Heart left ventricle (tissue), 16 donors: ENCODE measurements at regions of chrX and their contacts with region 1.

Region 1: DNA sequence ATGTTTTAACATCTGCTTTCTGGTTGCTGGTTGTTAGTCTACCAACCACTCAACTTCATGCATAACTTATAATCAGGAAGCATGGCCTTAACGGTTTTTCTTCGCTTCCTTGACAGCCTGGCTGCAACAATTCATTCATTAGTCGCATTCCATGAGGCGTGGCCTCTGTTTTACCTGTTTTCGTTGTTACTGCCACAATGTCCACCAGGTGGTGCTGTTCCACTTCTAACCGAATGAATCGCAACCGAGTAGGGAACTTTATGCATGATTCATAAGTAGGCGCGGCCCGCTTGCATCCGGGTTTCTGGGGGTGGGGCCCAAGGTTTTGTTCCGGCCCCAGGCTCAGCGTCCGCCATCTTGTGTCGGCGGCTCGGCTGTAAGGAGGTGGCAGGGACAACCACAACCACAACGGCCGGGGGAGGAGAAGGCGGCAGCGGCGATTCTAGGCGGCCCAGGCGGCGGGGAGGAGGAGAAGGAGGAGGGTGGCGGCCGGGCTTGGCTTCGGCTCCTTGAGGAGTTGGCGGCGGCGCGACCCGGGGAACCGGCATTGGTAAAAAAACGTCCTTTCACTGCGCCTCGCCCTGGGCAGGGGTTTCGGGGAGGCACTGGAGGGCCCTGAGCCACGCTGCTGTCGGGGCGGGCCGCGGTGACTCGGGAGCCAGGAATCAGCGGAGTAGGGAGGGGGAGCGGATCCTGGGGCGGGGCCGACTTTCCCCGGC is at the start of gene UBA1:
- DNase-seq: peak; percentile 90 to 97 (median 93)
- ATAC-seq: peak; percentile 84 to 95 (median 94)
- H3K4me3 ChIP-seq: peak within 1 kb of the TSS; percentile 61 to 99 (median 83)
- H3K27ac ChIP-seq: peak within 1 kb of the TSS; percentile 84 to 98 (median 96)
- H3K4me1 ChIP-seq: peaks cover 0 to 68% (median 36%) of the 10 kb centered on the region in 12 donors
- H3K27me3 ChIP-seq: peaks cover 0 to 18% (median 0%) of the 10 kb centered on the region in 9 donors
- CTCF ChIP-seq: peak; percentile 60 to 93 (median 70)
- POLR2A ChIP-seq: peak in 1 of 2 donors; percentile 79
- total RNA-seq, gene UBA1: 116 to 171 (median 130) TPM

Region 2: GRCh38 chrX:46903458-46904242 is 290.0 kb before region 1 on chrX:
- intact Hi-C with region 1: no loop called
- DNase-seq: peak; percentile 72 to 84 (median 78)
- ATAC-seq: peak; percentile 96 to 99 (median 98)
- H3K4me3 ChIP-seq: peak overlapping the region in 11 of 12 donors; percentile 16 to 60 (median 48)
- H3K27ac ChIP-seq: no peak overlapping the region
- H3K4me1 ChIP-seq: peaks cover 0 to 12% (median 0%) of the 10 kb centered on the region in 12 donors
- H3K27me3 ChIP-seq: peaks cover 0 to 42% (median 0%) of the 10 kb centered on the region in 9 donors
- CTCF ChIP-seq: peak; percentile 35 to 77 (median 61)
- POLR2A ChIP-seq: no peak

Region 3: GRCh38 chrX:47384502-47384901 is 190.9 kb after region 1 on chrX:
- intact Hi-C with region 1: loop called (anchors 1 to 5 kb)
- DNase-seq: peak in 4 of 5 donors; percentile 32 to 55 (median 46)
- ATAC-seq: peak in 3 of 4 donors; percentile 60 to 66 (median 63)
- H3K4me3 ChIP-seq: no peak overlapping the region
- H3K27ac ChIP-seq: no peak overlapping the region
- H3K4me1 ChIP-seq: no peaks in the 10 kb centered on the region
- H3K27me3 ChIP-seq: peaks cover 0 to 13% (median 0%) of the 10 kb centered on the region in 9 donors
- CTCF ChIP-seq: peak; percentile 55 to 88 (median 70)
- POLR2A ChIP-seq: no peak

Region 4: DNA sequence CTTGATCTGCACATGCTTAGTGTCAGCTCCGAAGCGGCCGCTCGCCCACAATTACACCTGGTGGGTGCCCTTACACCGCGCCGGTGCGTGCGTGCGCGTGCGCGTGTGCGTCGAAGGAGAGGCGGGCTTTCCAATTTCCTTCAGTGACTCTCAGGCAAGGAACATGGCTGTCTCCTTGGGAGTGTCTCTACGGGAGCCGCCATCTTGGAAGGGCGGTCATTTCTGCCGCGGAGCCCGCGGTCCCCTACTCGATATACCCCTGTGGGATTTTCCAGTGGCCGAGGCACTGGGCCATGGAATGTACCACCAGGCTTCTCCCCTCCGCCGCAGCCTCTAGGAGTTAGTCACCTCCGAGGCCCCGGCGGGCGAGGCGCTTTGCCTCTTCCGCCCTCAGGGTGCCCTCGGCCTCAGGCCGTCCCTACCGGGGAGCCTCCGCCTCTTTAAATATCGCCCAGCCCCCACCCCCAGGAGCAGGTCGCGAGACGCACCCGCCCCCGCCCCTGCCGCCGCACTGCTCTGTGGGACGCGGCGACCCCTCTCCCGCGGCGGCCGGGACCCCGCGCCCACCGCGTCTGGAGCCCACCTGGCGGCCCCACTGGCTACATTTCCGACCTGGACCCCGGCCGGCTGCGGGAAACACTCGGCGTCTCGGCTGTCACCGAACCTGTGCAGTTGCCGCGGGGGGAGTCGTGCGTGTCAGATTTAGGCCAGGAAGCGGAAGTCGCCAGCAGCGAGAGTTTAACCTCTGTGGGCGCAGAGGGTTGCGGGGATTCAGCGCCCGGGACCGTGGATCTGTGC is 289.1 kb after region 1 on chrX and contains the start of gene ZNF41:
- intact Hi-C with region 1: loop called in 1 of 10 experiments (anchors 2 kb)
- DNase-seq: peak; percentile 69 to 84 (median 78)
- ATAC-seq: peak; percentile 85 to 95 (median 94)
- H3K4me3 ChIP-seq: peak within 1 kb of the TSS; percentile 45 to 99 (median 83)
- H3K27ac ChIP-seq: peak within 1 kb of the TSS; percentile 93 to 100 (median 98)
- H3K4me1 ChIP-seq: peaks cover 0 to 26% (median 2%) of the 10 kb centered on the region in 12 donors
- H3K27me3 ChIP-seq: no peaks in the 10 kb centered on the region
- CTCF ChIP-seq: no peak
- POLR2A ChIP-seq: peak in 1 of 2 donors; percentile 42
- total RNA-seq, gene ZNF41: 10.3 to 19.6 (median 13.1) TPM

Region 5: DNA sequence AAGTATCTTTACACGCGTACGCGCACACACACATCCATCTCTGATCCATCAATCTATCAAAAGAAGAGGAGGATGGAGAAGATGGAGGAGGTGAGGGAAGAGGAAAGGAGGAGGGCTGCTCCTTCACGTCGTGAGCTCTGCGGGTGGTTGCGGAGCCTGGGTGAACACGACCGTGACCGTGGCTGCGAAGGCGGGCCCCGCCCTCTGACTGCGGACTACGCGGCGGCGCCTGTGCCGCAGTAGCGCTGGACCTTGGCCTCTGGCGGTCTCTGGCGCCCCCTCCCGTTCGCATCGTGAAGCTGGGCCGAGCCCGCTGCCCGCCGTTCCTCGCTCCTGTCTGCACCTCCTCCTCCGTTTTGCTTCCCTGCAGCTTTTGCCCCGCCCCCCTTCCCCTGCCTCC is 329.7 kb after region 1 on chrX:
- intact Hi-C with region 1: loop called (anchors 1 to 5 kb)
- DNase-seq: peak; percentile 80 to 92 (median 87)
- ATAC-seq: peak; percentile 95 to 99 (median 98)
- H3K4me3 ChIP-seq: peak overlapping the region; percentile 31 to 65 (median 56)
- H3K27ac ChIP-seq: peak overlapping the region in 2 of 12 donors; percentile 9 to 23
- H3K4me1 ChIP-seq: peaks cover 0 to 6% (median 0%) of the 10 kb centered on the region in 12 donors
- H3K27me3 ChIP-seq: no peaks in the 10 kb centered on the region
- CTCF ChIP-seq: peak; percentile 71 to 84 (median 79)
- POLR2A ChIP-seq: no peak

Region 6: DNA sequence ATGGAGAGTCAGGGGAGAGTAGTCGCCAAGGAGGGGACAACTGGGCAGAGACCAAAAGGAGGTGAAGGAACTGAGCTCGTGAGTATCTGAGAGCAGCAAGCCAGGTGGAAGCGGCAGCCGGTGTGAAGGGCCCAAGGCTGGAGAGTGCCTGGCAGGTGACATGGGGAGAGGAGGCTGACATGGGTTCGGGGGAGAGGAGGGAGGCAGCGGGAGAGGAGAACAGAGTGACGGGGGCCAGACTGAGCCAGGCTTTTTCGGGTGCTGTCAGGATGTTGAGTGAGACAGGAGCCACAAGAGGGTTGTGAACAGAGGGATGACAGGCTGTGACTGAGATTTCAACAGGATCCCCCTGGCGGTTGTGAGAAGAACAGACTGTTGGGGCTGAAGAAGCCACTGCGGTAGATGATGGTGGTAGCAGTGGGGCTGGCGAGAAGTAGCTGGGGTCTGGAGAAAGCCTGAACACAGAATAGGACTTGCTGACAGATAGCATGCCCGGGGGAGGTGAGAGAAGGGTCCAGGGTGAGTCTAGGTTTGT is 451.0 kb after region 1 on chrX:
- intact Hi-C with region 1: loop called in 2 of 10 experiments (anchors 10 kb)
- DNase-seq: no peak
- ATAC-seq: peak; percentile 60 to 81 (median 66)
- H3K4me3 ChIP-seq: no peak overlapping the region
- H3K27ac ChIP-seq: peak overlapping the region in 1 of 12 donors; percentile 10
- H3K4me1 ChIP-seq: peaks cover 0 to 17% (median 7%) of the 10 kb centered on the region in 12 donors
- H3K27me3 ChIP-seq: peaks cover 0 to 4% (median 0%) of the 10 kb centered on the region in 9 donors
- CTCF ChIP-seq: peak in 10 of 12 donors; percentile 10 to 45 (median 32)
- POLR2A ChIP-seq: no peak

Region 7: DNA sequence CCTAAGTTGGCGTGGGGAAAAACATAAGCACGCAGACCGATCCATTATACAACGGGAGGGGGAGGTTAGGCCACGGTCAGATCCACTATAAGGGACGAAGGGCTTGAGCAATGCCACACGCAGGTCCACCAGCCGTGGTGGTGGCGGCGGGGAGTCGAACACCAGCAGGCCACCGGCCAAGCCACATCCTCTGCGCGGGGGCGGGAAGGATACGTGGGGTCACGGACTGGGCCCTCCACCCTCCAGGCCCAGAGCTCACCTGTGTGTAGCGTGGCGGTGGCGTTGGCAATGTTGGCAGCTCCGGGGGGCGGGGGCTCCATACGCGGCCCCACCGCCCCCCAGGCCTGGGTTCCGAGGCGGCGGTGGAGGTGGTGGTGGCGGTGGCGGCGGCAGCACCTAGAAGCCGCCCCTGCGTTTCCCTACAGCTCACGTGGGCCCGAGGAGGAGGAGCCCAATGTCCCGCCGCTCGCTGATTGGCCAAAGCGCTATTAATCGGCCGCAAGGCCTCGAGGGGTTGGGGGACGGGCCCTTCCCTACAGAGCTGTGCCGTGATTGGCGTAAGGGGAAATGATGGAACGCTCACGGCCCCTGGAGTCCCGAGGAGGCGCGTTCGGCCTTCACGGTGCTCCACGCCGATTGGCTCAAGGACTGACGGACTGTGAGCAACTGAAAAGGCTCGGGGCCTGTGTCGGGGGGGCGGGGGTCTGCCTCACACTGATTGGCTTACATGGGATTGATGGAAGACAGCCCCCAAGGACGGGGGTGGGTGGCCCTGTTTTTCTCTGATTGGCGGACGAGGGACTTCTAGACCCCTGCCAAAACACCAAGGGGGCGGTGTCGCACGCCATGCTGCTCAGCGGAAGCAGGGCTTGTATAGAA is 456.8 kb after region 1 on chrX and contains the start of gene ELK1:
- intact Hi-C with region 1: loop called in 5 of 10 experiments (anchors 5 to 10 kb)
- DNase-seq: peak; percentile 93 to 97 (median 95)
- ATAC-seq: peak; percentile 94 to 98 (median 97)
- H3K4me3 ChIP-seq: peak within 1 kb of the TSS; percentile 39 to 90 (median 70)
- H3K27ac ChIP-seq: peak within 1 kb of the TSS; percentile 47 to 93 (median 82)
- H3K4me1 ChIP-seq: peaks cover 0 to 17% (median 6%) of the 10 kb centered on the region in 12 donors
- H3K27me3 ChIP-seq: peaks cover 0 to 4% (median 0%) of the 10 kb centered on the region in 9 donors
- CTCF ChIP-seq: peak in 2 of 12 donors; percentile 18 to 30
- POLR2A ChIP-seq: peak in 1 of 2 donors; percentile 39
- total RNA-seq, gene ELK1: 23.7 to 35.3 (median 29.7) TPM